ENCODE measurements at regions of chr5 and their contacts with region 1.

Region 1: GRCh38 chr5:77143998-77144836 is 57.1 kb upstream of the ZBED3 start:
- DNase-seq: peak; percentile 56
- H3K4me3 ChIP-seq: no peak overlapping the region
- H3K27ac ChIP-seq: no peak overlapping the region
- H3K27me3 ChIP-seq: no peaks in the 10 kb centered on the region
- CTCF ChIP-seq: peak; percentile 95

Region 2: DNA sequence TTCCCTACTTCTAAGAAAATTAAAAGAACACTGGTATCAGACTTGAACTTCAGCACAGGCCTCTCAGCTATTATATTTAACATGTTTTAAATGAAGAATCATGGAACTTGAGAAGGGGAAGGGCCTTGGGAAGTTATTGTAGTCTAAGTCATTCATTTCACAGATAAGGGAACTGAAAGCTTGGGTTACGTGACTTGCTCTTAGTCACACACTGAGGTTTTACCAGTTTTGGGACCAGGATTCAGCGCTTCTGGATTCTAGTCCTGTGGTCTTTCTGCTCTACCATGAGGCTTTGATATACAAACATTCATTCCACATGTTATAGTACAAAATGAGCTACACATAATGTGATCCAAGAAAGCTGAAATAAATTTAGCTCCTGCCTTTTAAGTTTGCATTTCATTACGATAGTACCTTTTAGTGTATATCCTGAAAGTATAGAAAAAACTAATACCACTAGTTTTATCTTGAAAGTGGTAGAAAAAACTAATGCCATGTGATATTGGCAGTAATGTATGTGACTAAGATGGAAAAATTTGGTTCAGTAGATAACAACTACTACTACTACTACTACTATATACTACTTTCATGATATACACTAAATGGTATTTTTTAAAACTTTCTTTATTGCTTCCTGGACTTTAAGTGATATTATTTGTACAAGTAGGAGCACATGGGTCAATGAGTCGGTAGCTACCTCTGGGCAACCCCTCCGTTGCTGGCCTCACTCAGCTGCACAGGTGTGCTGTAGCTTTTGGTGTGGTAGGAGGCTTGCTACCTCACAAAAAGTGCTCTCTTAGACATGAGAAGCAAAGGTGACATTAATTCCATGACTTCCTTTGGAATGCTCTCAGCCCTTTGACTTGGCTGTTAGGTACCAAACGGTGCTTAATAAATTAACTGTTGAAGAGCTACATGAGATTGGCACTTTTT is 561.7 kb before region 1 on chr5:
- CTCF ChIA-PET with region 1: no interaction called
- POLR2A ChIA-PET with region 1: no interaction called
- DNase-seq: no peak
- H3K4me3 ChIP-seq: no peak overlapping the region
- H3K27ac ChIP-seq: no peak overlapping the region
- H3K27me3 ChIP-seq: no peaks in the 10 kb centered on the region
- CTCF ChIP-seq: no peak

Region 3: DNA sequence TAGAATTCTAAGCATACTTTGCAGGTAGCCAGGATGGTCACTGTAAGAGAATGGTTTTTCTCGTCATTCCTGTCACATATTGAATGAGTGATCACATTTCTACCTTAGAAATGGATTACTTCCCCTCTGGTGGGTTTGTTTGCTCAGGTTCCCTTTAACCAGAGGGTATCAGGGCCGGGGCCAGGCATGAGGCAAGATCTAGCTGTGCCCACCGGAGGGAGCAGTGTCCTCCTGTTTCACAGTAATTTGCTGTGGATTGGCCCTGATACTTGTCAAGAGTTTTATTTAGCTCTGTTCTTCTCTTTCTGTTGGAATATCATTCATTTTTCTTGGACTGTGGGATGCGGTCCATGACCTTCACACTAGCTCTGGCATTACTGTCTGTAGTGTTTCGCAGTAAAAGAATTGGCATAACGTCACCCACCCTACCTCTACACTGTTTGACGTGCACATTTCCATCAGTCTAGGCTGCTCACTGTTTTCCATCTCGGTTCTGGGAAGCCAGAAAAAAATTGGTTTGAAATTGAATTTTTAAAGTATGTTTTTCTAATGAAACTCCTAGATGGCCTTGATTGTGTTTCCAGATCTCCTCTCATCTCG is 14.7 kb before region 1 on chr5:
- CTCF ChIA-PET with region 1: interaction called, 44 read pairs
- POLR2A ChIA-PET with region 1: no interaction called
- DNase-seq: no peak
- H3K4me3 ChIP-seq: no peak overlapping the region
- H3K27ac ChIP-seq: no peak overlapping the region
- H3K27me3 ChIP-seq: peaks cover 23% of the 10 kb centered on the region
- CTCF ChIP-seq: peak; percentile 56

Region 4: GRCh38 chr5:77155179-77155785 is 11.1 kb after region 1 on chr5:
- CTCF ChIA-PET with region 1: interaction called, 22 read pairs
- POLR2A ChIA-PET with region 1: no interaction called
- DNase-seq: no peak
- H3K4me3 ChIP-seq: no peak overlapping the region
- H3K27ac ChIP-seq: no peak overlapping the region
- H3K27me3 ChIP-seq: no peaks in the 10 kb centered on the region
- CTCF ChIP-seq: no peak

Region 5: GRCh38 chr5:77168161-77168875 is 24.1 kb after region 1 on chr5:
- CTCF ChIA-PET with region 1: interaction called, 18 read pairs
- POLR2A ChIA-PET with region 1: no interaction called
- DNase-seq: no peak
- H3K4me3 ChIP-seq: peak overlapping the region; percentile 35
- H3K27ac ChIP-seq: peak overlapping the region; percentile 89
- H3K27me3 ChIP-seq: no peaks in the 10 kb centered on the region
- CTCF ChIP-seq: no peak

Region 6: GRCh38 chr5:77175231-77175630 is 31.0 kb after region 1 on chr5:
- CTCF ChIA-PET with region 1: interaction called, 13 read pairs
- POLR2A ChIA-PET with region 1: no interaction called
- DNase-seq: no peak
- H3K4me3 ChIP-seq: no peak overlapping the region
- H3K27ac ChIP-seq: no peak overlapping the region
- H3K27me3 ChIP-seq: peaks cover 33% of the 10 kb centered on the region
- CTCF ChIP-seq: no peak

Region 7: DNA sequence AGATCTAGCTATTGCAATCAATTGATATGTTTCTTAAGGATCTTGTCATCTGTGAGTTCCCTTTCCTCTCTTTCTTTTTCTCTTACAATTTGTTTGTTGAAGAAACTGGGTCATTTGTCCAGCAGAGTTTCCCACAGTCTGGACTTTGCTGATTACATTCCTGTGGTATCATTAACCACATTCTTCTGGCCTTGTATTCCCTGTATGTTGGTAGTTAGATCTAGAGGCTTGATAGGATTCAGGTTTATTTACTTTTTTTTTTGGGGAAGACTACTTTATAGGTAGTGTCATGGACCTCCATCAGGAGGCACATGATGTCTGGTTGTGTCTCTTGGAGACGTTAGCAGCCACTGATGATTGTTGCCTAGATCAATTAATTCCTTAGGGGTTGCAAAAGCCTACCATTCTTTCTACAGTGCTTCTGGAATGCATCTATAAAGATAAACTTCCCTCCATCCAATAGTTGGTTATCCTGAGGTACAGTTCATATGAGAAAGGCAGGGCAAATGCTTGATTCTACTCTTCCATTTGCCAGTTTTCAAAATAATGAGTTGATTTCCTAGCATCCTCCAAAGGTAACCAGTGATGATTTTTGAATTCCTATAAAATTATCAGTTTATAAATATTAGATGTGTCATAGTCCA is 80.6 kb after region 1 on chr5:
- CTCF ChIA-PET with region 1: no interaction called
- POLR2A ChIA-PET with region 1: no interaction called
- DNase-seq: peak; percentile 26
- H3K4me3 ChIP-seq: no peak overlapping the region
- H3K27ac ChIP-seq: no peak overlapping the region
- H3K27me3 ChIP-seq: peaks cover 23% of the 10 kb centered on the region
- CTCF ChIP-seq: no peak

Region 8: DNA sequence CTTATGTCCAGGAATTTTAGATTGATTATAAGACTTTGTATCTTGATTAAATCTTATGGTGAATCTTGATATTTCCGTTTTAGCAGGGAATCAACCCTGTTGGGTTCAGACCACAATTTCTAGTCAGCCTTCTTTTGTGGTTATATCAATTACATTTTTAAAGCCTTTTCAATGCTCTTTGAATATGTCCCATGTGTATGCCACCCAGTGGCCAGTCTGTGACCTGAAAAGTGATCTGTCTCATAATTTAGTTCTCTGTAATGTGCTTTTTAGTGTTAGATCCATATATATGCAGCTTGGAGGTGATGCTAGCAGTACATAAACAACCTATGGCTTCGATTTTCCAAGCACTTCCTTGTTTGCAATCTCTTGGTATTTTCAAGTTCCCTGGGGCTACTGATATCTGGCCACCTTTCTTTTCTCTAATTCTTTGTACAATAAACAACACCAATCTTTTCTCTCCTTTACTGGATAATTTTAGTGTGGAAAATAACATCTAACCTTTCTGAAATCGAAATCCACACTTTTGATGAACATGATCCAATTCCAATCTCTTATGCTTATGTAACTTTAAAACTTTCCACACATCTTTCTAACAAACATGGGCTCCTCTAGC is 95.0 kb after region 1 on chr5:
- CTCF ChIA-PET with region 1: interaction called, 12 read pairs
- POLR2A ChIA-PET with region 1: no interaction called
- DNase-seq: no peak
- H3K4me3 ChIP-seq: no peak overlapping the region
- H3K27ac ChIP-seq: no peak overlapping the region
- H3K27me3 ChIP-seq: no peaks in the 10 kb centered on the region
- CTCF ChIP-seq: peak; percentile 29; the same call in 1 of the 2 replicates

Region 9: DNA sequence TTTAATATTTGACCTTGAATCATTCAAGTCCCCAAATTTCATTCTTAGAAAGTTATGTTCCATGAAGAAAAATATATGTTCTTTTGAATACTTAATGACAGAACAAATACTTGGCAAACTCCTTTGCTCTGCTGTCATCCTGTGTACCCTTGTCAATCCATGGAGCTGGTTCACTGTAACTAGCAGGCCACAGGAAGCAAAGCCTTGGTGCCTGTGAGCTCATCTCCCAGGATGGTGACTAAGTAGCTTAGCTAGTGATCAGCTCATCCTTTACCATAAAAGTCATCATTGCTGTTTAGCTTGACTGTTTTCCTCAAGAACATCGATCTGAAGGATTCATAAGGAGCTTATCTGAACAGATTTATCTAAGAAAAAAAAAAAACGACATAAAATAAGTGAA is 282.5 kb after region 1 on chr5:
- CTCF ChIA-PET with region 1: interaction called, 16 read pairs
- POLR2A ChIA-PET with region 1: no interaction called
- DNase-seq: peak; percentile 23
- H3K4me3 ChIP-seq: no peak overlapping the region
- H3K27ac ChIP-seq: no peak overlapping the region
- H3K27me3 ChIP-seq: no peaks in the 10 kb centered on the region
- CTCF ChIP-seq: no peak

Region 10: DNA sequence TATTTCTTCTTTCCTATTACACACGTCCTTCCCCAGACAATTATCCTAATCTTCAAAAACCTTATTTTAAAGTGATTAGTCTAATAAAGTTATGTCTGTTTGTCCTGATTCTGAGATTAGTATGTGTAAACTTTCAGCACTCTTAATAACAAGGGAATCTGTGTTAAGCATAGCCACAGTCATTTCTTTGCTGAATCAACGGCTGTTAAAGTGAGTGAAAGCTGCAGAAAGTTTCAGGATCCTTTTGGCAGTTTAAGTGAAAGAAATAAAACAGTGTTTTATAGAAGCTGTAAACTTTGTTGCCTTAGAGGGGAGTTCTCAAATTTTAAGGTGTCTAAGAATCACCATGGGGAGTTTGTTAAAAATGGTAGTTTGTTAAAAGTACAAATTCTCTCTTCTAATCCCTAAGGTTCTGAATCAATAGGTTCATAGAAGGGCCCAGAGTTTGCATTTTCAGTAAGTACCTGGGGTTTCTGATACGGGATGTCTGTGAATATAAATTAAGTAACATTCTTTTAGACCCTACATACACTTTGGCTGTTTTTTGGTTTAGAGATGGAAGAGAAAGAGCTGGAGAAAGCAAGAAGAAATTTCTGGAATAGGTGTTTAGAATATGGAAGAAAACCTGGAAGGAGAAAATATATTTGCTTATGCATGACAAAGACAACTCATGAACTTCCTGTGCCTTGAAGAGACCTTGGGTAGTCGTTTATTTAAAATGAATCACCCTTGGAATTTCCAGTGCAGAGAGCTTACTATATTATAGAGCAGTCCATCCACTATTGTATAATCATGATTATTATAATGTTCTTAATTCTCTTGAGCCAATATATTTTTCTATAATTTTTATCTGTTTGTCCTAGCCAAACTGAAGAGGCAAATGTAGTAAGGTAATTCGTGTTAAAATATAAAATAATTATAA is 1261.9 kb after region 1 on chr5:
- CTCF ChIA-PET with region 1: no interaction called
- POLR2A ChIA-PET with region 1: no interaction called
- DNase-seq: no peak
- H3K4me3 ChIP-seq: no peak overlapping the region
- H3K27ac ChIP-seq: no peak overlapping the region
- H3K27me3 ChIP-seq: no peaks in the 10 kb centered on the region
- CTCF ChIP-seq: no peak

Measured in AG04450 (cell line).